Common myeloid progenitor, CD34-positive (primary cell): ENCODE measurements at regions of chr1 and their contacts with region 1.

Region 1: DNA sequence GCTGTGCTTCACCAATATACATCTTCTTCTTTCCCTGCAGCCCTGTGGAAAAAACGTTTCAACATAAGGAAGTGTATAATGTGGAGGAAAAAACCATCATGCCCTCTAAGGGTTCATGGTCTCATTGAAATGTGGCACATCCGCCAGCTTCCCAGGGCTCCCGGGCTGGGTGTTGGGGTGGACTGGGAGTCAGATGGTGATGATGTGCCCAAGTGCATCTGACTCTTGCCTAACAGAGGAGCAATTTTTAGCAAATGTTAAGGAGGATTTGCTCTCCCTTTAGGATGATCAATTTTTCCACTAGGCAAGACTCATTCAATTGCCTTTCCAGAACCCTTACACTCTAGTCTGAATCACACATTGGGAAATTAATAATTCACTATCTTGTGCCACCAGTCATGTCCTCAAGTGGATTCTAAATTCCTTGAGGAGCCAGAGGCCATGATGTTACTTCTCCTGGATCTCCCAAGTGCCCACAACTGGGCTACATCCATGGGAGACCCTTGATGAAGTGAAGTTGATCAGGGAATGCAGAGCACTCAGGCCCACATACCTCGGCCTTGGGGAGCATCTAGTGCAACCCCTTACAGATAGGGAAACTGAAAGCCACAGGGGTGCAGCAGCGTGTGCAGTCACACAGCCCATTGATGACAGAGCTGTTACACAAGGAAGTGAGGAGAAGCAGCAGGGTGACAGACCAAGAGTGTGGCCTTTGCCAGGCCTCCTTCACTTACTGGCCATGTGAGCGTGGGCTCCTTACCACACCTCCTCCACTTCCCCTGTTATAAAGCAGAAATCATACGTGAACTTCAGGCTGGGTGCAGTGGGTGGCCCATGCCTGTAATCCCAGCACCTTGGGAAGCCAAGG is 100.0 kb upstream of the SLC44A3 start:
- DNase-seq: peak; percentile 29 to 88 (median 84)
- H3K4me3 ChIP-seq: peak overlapping the region in 3 of 7 experiments; percentile 4 to 17 (median 8)
- H3K27ac ChIP-seq: peak overlapping the region; percentile 62 to 81
- H3K4me1 ChIP-seq: peaks cover 29 to 73% (median 51%) of the 10 kb centered on the region in 4 experiments
- H3K27me3 ChIP-seq: no peaks in the 10 kb centered on the region

Region 2: DNA sequence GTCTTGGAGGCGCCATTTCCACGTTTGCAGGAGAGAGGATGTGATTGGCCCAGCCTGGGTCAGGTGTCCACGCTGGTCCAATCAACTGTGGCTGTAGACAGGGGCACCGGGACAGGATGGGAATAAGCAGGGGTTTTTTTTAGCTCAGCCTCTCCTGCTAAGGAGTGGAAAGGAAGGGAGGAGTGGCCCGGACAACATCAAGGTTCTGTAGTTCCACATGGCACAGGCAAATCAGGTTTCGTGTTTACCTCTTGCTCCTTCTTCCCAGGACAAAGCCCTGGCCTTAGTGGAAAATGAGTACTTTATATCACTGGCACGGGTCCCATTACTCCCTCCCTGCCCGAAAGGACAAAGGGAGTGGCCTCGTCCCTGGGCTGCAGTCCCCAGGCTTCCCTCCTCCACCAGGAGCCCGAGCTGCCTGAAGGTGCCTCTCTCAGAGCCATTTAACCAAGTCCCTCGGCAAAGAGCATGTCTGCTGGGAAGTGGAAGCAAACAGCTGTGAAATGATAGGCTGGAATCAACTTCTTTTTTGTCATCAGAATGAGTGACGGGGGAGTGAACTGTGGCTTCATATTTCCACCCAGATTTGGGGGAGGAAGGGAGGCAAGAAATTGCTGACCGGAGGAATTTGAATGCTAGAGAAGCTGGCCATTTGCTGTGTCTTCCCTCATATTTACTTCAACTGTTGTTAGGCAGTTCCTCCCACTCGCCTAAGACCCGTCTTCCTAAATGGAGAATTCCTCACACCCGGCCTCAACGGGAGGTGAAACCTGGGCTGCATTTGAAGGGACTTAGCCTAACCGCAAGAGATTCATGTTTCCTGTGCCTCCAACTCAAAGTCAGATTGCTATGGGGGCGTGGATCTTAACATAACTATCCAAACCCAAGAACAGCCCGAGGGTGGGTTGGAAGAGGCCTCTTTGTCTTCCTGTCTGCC is 15.1 kb after region 1 on chr1:
- CTCF ChIA-PET with region 1: interaction called, 24 read pairs
- POLR2A ChIA-PET with region 1: no interaction called
- DNase-seq: peak in 2 of 3 donors; percentile 68 to 83
- H3K4me3 ChIP-seq: peak overlapping the region in 2 of 7 experiments; percentile 3 to 32
- H3K27ac ChIP-seq: no peak overlapping the region
- H3K4me1 ChIP-seq: peaks cover 0 to 41% (median 24%) of the 10 kb centered on the region in 4 experiments
- H3K27me3 ChIP-seq: no peaks in the 10 kb centered on the region